HEK293 (cell line): ENCODE measurements at regions of chr14 and their contacts with region 1.

Region 1: DNA sequence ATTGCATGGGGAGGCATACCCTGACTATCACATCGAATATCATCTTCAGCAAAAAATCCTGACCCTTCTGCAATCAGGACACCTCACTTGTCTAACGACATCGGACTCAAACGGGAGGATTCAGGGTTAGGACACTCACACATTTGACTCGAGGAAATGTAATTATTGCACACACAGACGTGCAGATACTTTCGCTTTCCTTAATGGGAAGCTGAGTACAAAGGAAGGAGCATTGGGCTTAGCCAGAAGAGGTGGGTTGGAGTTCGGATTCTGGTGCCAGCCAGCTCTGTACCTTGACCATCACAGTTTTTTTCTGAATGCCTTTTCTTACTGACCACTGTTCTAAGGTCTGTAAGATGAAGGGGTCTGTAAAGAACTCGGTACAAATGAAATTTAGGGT is 260.4 kb downstream of the GALC start:
- H3K4me3 ChIP-seq: no peak overlapping the region
- H3K27ac ChIP-seq: no peak overlapping the region
- H3K4me1 ChIP-seq: no peaks in the 10 kb centered on the region
- CTCF ChIP-seq: no peak

Region 2: DNA sequence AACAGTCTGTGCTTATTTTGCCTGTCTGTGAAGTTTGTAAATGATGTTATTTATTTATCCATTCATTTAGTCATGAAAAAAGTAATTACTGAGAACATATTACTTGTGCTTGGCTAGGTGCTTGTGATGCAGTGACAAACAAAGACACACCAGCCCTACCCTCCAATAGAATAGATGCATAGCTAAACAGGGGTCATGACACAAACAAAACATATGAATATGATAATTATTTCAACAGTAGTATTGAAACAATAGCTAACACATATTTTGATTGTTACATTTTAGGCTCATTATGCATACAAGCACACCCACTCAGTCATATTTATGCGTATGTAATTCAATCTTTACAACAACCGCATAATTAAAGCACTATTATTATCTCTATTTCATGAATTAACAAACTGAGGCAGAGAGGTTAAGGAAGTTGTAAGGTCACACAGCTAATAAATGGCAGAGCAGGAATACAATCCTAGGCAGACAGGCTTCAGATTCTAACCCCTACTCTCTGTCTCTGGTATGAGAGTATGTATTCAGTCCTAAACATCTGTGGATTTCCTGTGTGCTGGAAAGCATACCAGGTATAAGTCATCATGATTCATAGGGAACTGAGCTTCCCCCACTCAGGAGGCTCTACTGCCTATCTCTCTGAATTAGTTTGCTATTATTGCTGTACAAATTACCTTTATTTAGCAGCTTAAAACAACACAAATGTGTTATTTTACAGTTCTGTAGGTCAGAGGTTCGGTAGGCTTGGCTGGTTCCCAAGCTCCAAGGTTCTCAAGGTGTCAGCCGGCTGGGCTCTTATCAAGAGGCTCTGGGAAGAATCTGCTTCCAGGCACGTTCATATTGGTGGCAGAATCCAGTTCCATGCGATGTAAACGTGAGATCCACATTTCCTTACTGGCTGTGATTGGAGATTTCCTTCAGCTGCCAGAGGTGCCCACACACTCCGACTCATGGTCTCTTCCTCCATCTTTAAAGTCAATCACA is 249.0 kb before region 1 on chr14:
- CTCF ChIA-PET with region 1: no interaction called
- POLR2A ChIA-PET with region 1: no interaction called
- H3K4me3 ChIP-seq: no peak overlapping the region
- H3K27ac ChIP-seq: no peak overlapping the region
- H3K4me1 ChIP-seq: no peaks in the 10 kb centered on the region
- CTCF ChIP-seq: no peak

Region 3: DNA sequence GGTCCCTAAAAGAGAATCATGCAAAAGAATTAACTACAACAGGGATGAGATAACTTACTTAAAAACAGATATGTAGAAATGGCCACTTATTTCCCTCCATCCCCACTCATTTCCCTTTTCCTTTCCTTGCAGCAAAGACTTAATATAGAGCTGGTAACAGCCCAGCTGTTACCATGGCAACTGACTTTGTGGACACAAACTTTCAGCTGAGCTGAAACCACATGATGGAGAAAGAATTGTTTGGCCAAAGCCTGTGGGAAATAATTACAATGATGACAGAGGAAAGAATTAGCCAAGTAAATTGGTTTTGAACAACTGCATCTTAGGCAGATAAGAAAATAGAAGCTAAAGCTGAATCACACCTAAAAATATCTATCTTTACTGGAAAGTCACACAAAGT is 104.4 kb before region 1 on chr14:
- CTCF ChIA-PET with region 1: no interaction called
- POLR2A ChIA-PET with region 1: no interaction called
- H3K4me3 ChIP-seq: no peak overlapping the region
- H3K27ac ChIP-seq: no peak overlapping the region
- H3K4me1 ChIP-seq: no peaks in the 10 kb centered on the region
- CTCF ChIP-seq: no peak

Region 4: DNA sequence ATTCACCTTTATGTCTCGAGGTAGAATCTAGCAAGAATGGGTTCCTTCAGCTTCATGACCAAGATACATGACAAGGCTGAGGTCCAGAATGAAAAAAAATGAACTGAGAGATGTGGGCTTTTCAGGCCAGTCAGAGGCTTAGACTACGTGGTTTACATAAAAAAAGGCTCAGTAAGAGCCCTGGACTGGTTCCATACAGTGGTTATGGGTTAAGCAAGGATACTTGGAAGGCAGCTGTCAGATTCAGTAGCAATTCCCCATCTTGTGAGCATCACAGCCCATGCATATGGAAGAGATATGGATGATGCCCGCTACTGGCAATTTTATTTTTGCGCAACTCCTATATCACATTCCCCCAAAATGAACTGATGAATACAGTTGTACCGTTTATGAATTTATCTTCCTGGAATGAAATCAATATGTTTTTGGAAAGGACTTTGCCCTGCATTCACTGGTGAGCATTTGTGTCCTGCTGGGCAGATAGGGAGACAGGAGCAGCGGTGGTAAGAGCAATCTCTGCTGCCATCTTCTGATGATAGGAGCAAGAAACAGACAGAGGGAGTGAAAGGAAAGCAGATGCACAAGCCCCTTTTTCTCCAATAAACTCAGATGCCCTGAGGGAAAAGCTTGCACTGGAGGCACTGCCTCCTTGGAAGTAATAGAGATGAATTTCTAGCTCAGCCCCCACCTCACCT is 20.0 kb before region 1 on chr14:
- CTCF ChIA-PET with region 1: no interaction called
- POLR2A ChIA-PET with region 1: no interaction called
- H3K4me3 ChIP-seq: no peak overlapping the region
- H3K27ac ChIP-seq: no peak overlapping the region
- H3K4me1 ChIP-seq: no peaks in the 10 kb centered on the region
- CTCF ChIP-seq: no peak

Region 5: GRCh38 chr14:87745507-87746118 is 13.1 kb after region 1 on chr14:
- CTCF ChIA-PET with region 1: interaction called, 11 read pairs
- POLR2A ChIA-PET with region 1: no interaction called
- H3K4me3 ChIP-seq: no peak overlapping the region
- H3K27ac ChIP-seq: no peak overlapping the region
- H3K4me1 ChIP-seq: no peaks in the 10 kb centered on the region
- CTCF ChIP-seq: no peak

Region 6: GRCh38 chr14:87799400-87799799 is 66.8 kb after region 1 on chr14:
- CTCF ChIA-PET with region 1: no interaction called
- POLR2A ChIA-PET with region 1: no interaction called
- H3K4me3 ChIP-seq: no peak overlapping the region
- H3K27ac ChIP-seq: no peak overlapping the region
- H3K4me1 ChIP-seq: no peaks in the 10 kb centered on the region
- CTCF ChIP-seq: no peak